Activated CD8-positive, alpha-beta T cell treated with anti-CD3 and anti-CD28 coated beads, Interleukin-2, amount 10 ng/mL, durations not matched to agents 7 days and 5 days (primary cell): ENCODE measurements at regions of chr17 and their contacts with region 1.

Region 1: DNA sequence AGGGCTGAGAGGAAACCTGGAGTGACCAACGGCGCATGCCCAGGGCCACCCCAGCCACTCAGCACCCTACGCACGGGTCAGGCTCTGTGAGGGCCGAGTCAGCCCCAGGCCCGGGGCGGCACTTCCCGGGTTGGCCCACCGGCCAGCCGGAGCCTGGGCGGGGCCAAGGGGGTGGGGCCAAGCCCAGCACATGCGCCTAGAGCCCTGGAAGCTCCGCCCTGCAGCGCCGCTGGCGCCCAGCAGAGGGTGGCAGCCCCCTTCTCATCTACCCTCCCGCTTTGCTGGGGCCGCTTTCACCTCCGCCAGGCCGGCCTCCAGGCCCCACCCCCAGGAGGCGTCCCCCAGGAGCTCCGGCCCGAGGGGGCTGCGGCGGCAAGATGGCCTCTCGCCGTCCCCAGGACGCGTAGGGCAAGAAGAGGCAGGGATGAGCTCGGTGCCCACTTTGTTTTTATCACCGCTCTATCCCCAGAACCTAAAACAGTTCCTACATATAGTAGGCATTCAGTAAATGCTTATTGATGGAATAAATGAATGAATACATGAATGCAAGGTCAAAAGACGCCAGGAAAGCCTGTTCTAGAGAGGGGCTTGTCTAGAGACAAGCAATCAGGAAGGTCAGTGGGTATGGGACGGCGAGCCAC is 31.3 kb downstream of the MYO18A start:
- DNase-seq: peak; percentile 95
- ATAC-seq: peak; percentile 96
- H3K4me3 Mint-ChIP-seq: peak overlapping the region; percentile 72
- H3K27ac Mint-ChIP-seq: peak overlapping the region; percentile 78
- H3K4me1 Mint-ChIP-seq: peaks cover 64% of the 10 kb centered on the region
- H3K27me3 Mint-ChIP-seq: no peaks in the 10 kb centered on the region

Region 2: GRCh38 chr17:28967221-28968140 is 181.4 kb before region 1 on chr17:
- CTCF ChIA-PET with region 1: interaction called, 16 read pairs
- POLR2A ChIA-PET with region 1: no interaction called
- DNase-seq: no peak
- ATAC-seq: no peak
- H3K4me3 Mint-ChIP-seq: no peak overlapping the region
- H3K27ac Mint-ChIP-seq: peak overlapping the region; percentile 51
- H3K4me1 Mint-ChIP-seq: peaks cover 4% of the 10 kb centered on the region
- H3K27me3 Mint-ChIP-seq: peaks cover 15% of the 10 kb centered on the region

Region 3: DNA sequence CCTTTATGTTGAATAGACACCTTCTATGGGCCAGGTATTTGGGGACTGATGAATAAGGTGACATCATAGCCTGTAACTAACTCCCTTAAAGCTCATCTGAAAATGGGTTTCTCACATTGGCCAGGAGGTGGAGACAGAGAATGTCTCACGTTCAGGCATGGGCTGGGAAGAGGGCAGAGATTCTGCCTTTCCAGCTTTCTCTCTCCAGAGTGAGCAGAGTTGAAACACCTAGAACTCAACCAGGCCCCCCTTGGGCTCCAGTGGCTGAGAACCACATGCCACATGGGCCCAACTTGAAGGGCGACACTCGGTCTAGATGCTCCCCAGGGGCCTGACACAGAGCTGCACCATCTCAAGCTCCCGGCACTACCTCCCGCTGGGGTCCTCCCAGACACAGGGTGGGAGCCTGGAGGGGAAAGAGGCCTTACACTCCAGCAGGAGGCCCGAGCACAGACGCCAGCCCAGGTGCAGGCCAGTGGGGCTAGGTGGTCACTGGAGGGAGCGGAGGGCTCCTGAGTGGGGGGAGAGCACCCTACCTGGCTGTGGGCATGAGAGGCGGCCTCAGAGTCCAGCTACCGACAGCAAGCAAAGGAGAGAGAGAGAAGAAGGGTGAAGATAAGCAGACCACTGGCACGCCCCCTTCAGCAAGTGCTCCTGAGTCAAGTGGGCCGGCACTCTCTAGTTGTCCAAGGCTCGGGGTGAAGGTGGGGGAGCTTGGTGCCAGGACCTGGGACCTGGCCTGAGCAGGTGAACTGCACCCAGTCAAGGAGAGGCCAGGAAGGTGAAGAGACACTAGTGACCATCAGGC is 24.6 kb before region 1 on chr17:
- CTCF ChIA-PET with region 1: interaction called, 414 read pairs
- POLR2A ChIA-PET with region 1: interaction called, 8 read pairs
- DNase-seq: peak; percentile 69
- ATAC-seq: peak; percentile 88
- H3K4me3 Mint-ChIP-seq: no peak overlapping the region
- H3K27ac Mint-ChIP-seq: peak overlapping the region; percentile 30
- H3K4me1 Mint-ChIP-seq: peaks cover 4% of the 10 kb centered on the region
- H3K27me3 Mint-ChIP-seq: no peaks in the 10 kb centered on the region

Region 4: DNA sequence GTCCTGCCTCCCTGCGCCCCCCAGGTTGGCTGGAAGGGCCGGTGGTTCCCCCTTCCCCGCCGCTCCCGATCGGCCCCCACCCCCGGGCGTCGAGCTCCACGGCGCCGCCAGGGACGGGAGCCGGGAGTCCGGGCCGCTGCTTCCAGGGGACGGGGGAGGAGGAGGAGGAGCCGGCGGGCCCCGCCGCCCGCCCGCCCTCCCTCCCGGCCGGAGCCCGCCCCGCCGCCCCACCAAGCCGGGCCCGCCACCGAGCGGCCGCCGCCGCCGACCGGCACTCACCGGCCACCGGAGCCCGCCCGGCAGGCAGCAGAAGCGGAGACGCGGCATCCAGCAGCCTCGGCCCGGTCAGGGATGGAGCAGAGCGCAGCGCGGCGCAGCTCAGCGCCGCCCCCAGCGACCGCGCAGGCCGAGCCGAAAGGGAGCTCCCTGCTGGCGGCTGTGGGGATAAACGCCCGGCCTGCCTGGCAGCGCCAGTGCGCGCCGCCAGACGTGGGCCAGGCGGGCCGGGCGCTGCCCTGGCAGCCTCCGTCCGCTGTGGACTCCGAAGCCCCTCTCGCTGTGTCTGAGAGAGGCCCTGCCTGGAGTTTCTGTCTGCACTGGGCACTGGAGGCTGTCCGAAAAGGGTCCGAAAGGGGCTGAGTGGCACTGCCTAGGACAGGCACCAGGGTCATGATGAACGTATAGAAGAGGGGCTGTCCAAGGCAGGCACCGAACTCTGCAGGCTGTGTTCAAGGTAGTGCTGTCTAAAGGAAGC is 31.3 kb after region 1 on chr17 and contains the start of gene MYO18A:
- CTCF ChIA-PET with region 1: interaction called, 342 read pairs
- POLR2A ChIA-PET with region 1: interaction called, 12 read pairs
- DNase-seq: peak; percentile 83
- ATAC-seq: peak; percentile 94
- H3K4me3 Mint-ChIP-seq: peak within 1 kb of the TSS; percentile 51
- H3K27ac Mint-ChIP-seq: no peak within 1 kb of the TSS
- H3K4me1 Mint-ChIP-seq: peaks cover 38% of the 10 kb centered on the region
- H3K27me3 Mint-ChIP-seq: peaks cover 10% of the 10 kb centered on the region
- total RNA-seq, gene MYO18A: 53.4 to 53.8 TPM

Region 5: DNA sequence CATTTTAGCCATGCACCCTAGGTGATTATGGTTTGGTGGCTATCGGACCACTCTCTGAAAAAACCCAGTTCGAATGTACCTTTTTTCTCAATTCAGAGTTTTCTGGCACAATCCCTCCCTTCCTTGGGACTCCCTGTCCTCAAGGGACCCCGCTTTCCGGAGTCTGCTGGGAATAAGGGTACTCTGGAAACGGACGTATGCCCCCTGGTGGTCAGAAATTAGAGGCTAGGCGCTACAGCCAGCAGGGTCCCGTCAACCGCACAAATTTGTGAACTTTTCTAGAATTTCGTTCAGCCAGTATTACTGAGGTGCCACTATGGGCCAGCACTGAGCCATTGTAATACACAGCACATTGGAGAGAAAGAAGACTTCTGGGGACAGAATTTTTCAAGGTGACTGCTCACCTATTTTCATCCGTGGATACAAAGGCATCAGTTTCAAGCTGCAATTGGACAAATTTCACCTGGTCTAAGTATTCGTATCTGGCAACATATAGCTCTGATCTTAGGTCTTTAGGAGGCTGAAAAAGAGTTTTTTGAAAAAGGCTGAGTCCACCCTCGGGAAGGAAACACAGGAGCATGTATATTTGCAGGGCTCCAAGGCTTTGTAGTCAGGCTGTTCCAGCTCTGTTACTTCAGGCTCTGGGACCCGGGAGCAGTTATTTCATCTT is 70.6 kb after region 1 on chr17:
- CTCF ChIA-PET with region 1: interaction called, 266 read pairs
- POLR2A ChIA-PET with region 1: interaction called, 4 read pairs
- DNase-seq: peak; percentile 81
- ATAC-seq: peak; percentile 95
- H3K4me3 Mint-ChIP-seq: no peak overlapping the region
- H3K27ac Mint-ChIP-seq: no peak overlapping the region
- H3K4me1 Mint-ChIP-seq: peaks cover 9% of the 10 kb centered on the region
- H3K27me3 Mint-ChIP-seq: peaks cover 2% of the 10 kb centered on the region

Region 6: DNA sequence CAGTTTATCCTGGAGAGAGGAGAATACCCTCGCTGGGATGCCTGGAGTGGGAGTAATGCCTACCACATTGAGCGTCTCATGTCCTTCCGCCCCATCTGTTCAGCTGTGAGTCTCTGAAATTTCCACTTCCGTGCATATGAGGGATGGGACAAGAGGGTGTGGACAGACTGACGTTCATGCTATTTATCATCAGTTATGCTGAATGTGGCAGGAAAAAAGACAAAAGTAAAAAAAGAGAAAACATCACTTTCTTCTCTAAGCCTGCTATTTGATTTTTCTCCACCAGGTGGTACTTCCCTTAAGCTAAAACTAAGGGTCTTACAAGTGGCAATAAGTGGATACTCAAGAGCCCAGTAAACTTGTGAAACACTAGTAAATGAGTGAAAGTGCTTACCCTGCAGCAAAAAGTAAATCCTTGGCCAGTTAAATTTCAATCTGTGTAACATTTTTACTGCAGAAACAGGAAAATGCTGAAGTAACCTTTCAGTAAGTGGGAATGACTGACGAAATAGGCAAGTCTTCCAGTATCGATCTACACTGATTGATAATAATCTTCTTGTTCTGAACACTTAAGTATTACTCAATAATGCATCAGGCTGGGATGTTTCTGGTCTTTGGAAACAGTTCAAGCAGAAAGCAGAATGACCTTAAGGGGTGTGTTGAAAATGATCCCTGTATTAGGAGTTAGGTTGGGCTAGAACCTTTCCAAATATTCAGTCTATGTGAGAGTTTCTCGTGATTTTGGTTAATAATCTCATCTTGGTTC is 103.4 kb after region 1 on chr17:
- CTCF ChIA-PET with region 1: interaction called, 12 read pairs
- POLR2A ChIA-PET with region 1: no interaction called
- DNase-seq: no peak
- ATAC-seq: no peak
- H3K4me3 Mint-ChIP-seq: no peak overlapping the region
- H3K27ac Mint-ChIP-seq: no peak overlapping the region
- H3K4me1 Mint-ChIP-seq: peaks cover 4% of the 10 kb centered on the region
- H3K27me3 Mint-ChIP-seq: no peaks in the 10 kb centered on the region

Region 7: GRCh38 chr17:29369831-29370735 is 221.2 kb after region 1 on chr17:
- CTCF ChIA-PET with region 1: interaction called, 13 read pairs
- POLR2A ChIA-PET with region 1: no interaction called
- DNase-seq: peak; percentile 60
- ATAC-seq: peak; percentile 93
- H3K4me3 Mint-ChIP-seq: no peak overlapping the region
- H3K27ac Mint-ChIP-seq: no peak overlapping the region
- H3K4me1 Mint-ChIP-seq: no peaks in the 10 kb centered on the region
- H3K27me3 Mint-ChIP-seq: no peaks in the 10 kb centered on the region